ENCODE measurements at regions of chr19 and their contacts with region 1.

Region 1: DNA sequence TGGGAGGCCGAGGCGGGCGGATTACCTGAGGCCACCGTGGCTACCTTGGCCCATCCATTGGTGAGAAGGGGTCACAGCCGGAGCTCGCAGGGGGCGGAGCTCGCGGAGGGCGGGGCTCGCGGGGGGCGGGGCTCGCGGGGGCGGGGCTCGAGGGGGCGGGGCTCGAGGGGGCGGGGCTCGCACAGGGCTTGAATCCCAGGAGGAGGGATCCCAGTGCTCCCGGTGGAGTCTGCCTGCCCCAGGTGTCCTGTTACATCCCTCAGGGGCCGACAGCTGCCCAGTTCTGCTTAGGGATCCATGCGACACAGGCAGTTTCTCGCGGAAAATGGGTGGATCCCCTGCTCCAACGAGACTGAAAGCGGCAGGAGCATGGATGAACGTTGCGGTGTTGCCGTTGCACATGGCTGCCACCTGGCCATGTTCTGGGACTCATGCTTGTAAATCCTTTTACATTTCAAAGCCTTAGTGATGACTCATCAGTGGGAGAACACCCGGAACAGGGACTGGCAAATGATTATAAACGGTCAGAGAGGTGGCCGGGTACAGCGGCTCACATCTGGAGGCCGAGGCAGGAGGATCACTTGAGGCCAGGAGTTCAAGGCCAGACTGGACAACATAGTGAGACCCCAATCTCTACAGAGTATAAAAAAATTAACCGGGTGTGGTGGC is 25.1 kb downstream of the TMPRSS9 start:
- DNase-seq: peak in 1 of 10 donors; percentile 37

Region 2: DNA sequence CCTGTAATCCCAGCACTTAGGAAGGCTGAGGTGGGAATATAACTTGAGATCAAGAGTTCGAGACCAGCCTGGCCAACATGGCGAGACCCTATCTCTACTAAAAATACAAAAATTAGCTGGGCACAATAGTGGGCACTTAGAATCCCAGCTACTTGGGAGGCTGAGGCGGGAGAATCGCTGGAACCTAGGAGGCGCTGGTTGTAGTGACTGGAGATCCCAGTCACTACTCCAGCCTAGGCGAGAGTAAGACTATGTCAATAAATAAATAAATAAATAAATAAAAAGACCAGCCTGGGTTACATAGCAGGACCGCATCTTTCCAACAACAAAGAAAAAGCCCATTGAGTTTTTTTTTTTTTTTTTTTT is 223.5 kb before region 1 on chr19:
- intact Hi-C with region 1: loop called (anchors 2 kb)
- DNase-seq: no peak

Region 3: GRCh38 chr19:2332341-2333026 is 52.7 kb before region 1 on chr19:
- intact Hi-C with region 1: loop called (anchors 2 kb)
- DNase-seq: no peak